ENCODE measurements at regions of chr16 and their contacts with region 1.

Region 1: DNA sequence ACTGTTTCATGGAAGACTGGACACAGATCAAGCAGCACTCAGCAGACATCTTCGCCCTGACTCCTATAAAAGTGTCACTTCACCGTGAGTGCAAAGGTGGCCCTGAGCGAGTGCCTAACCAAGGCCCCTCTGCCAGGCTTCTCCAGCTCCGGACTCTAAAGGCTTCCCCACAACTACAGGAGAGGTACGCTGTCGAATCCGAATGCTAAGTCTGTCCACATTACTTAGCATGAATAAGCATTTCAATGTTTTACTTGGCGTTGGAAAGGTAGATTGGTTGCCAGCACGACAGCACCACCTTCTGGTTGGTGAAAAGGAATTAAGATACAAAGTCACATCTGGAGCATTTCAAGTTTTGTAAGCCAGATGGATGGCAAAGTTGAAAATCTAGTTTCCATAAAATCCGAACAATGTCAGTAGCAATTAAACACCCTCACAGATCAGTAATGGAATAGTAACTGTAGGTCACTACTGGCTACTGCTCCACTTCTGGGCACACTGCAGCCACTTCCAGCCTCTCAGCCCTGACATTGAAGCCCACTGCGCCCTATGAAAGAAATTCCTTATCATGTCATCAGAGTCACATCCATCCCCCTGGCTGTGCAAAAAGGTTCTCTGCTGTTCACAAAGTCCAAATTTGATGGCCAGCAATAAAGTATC is 100.9 kb downstream of the PARN start:
- DNase-seq: peak; percentile 76 to 85
- ATAC-seq: peak; percentile 91
- H3K4me3 ChIP-seq: peak overlapping the region; percentile 29 to 66
- H3K27ac ChIP-seq: no peak overlapping the region
- H3K4me1 ChIP-seq: peaks cover 2 to 4% of the 10 kb centered on the region in 2 donors
- H3K27me3 ChIP-seq: no peaks in the 10 kb centered on the region

Region 2: GRCh38 chr16:13926464-13926863 is 602.7 kb before region 1 on chr16:
- intact Hi-C with region 1: loop called (anchors 2 to 5 kb)
- DNase-seq: no peak
- ATAC-seq: no peak
- H3K4me3 ChIP-seq: no peak overlapping the region
- H3K27ac ChIP-seq: no peak overlapping the region
- H3K4me1 ChIP-seq: no peaks in the 10 kb centered on the region
- H3K27me3 ChIP-seq: no peaks in the 10 kb centered on the region

Region 3: GRCh38 chr16:14300705-14301168 is 228.4 kb before region 1 on chr16:
- intact Hi-C with region 1: loop called (anchors 1 to 2 kb)
- DNase-seq: peak; percentile 80 to 89
- ATAC-seq: peak; percentile 80
- H3K4me3 ChIP-seq: no peak overlapping the region
- H3K27ac ChIP-seq: peak overlapping the region in 1 of 2 donors; percentile 31
- H3K4me1 ChIP-seq: peaks cover 0 to 1% of the 10 kb centered on the region in 2 donors
- H3K27me3 ChIP-seq: no peaks in the 10 kb centered on the region

Measured in aorta (tissue), 5 donors.